Ascending aorta (tissue), 2 donors: ENCODE measurements at regions of chr19 and their contacts with region 1.

Region 1: GRCh38 chr19:21505459-21506451 is at the start of gene ZNF429:
- DNase-seq: peak; percentile 84 to 97
- H3K4me3 ChIP-seq: peak within 1 kb of the TSS; percentile 81 to 90
- H3K27ac ChIP-seq: peak within 1 kb of the TSS; percentile 96
- H3K4me1 ChIP-seq: peaks cover 0 to 15% of the 10 kb centered on the region in 2 donors
- H3K27me3 ChIP-seq: no peaks in the 10 kb centered on the region
- CTCF ChIP-seq: no peak
- total RNA-seq, gene ZNF429: 1.9 TPM

Region 2: DNA sequence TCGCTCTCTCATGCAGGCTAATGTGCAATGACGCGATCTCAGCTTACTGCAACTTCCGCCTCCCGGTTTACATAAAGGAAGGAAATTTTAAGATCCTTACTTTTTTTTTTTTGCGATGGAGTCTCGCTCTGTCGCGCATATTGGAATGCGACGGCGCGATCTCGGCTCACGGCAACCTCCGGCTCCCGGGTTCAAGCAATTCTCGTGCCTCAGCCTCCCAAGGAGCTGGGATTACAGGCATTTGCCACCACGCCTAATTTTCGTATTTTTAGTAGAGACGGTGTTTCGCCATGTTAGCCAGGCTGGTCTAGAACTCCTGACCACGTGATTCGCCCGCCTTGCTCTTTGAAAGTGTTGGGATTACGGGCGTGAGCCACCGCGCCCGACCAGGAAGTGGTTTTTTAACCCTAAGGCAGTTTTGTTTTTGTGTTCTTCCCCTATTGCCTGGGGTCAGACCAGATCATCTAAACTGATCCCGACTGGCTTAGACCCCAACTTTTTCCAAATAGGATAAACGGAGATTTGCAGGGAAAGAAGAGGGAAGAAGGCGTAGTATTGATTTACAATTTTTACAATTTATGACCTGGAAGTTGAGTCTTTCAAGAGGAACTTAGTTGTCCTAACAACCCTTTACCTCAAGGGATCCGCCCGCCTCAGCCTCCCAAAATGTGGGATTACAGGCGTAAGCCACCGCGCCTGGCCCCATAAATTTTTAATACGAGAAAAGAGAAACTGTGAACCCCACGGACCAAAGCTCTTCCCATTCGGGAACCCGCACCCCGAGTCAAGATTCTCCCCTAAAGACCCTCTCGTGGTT is 1082.2 kb before region 1 on chr19:
- intact Hi-C with region 1: loop called (anchors 10 kb)
- DNase-seq: peak; percentile 26 to 80
- H3K4me3 ChIP-seq: peak overlapping the region; percentile 63 to 71
- H3K27ac ChIP-seq: peak overlapping the region; percentile 77 to 87
- H3K4me1 ChIP-seq: peaks cover 0 to 3% of the 10 kb centered on the region in 2 donors
- H3K27me3 ChIP-seq: no peaks in the 10 kb centered on the region
- CTCF ChIP-seq: no peak

Region 3: DNA sequence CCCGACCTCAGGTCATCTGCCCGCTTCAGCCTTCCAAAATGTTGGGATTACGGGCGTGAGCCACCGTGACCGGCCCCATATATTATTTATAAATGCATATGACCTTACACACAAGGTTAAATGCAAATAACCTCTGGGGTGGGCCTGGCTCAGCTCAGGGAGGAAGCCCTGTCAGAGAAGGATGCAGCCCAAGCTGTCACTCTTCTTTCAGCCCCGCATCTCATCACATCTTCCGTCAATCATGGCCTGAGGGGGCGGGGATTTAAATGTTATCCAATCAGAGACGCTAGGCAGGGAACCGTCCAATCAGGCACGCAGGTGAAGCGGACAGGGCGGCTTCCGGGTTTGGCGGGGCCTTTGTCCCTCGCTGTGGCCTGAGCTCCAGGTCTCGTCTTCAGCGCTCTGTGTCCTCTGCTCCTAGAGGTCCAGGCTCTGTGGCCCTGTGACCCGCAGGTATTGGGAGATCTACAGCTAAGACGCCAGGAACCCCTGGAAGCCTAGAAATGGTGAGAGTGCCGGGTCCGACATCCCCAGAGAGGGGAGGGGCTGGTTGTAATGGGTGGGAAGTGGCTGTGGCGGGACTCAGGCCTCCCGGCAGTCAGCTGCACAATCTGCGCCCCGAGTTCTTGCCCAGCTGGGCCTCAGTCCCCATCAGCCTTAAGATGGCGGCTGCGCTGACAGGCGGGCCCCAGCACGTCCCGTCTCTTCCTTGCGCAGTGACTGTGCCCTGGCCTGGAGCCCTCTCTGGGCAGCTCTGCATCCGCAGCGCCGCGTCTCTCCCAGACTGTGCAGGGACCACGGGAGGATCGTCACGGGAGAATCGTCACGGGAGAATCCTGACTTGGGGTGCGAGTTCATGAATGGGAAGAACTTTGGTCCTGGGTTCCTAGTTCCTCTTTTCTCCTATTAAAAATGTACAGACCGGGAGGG is 485.2 kb before region 1 on chr19 and contains the start of gene ZNF430:
- intact Hi-C with region 1: loop called (anchors 10 kb)
- DNase-seq: peak; percentile 84 to 98
- H3K4me3 ChIP-seq: peak within 1 kb of the TSS; percentile 93
- H3K27ac ChIP-seq: peak within 1 kb of the TSS; percentile 75 to 88
- H3K4me1 ChIP-seq: peaks cover 0 to 4% of the 10 kb centered on the region in 2 donors
- H3K27me3 ChIP-seq: no peaks in the 10 kb centered on the region
- CTCF ChIP-seq: no peak
- total RNA-seq, gene ZNF430: 5.3 TPM

Region 4: DNA sequence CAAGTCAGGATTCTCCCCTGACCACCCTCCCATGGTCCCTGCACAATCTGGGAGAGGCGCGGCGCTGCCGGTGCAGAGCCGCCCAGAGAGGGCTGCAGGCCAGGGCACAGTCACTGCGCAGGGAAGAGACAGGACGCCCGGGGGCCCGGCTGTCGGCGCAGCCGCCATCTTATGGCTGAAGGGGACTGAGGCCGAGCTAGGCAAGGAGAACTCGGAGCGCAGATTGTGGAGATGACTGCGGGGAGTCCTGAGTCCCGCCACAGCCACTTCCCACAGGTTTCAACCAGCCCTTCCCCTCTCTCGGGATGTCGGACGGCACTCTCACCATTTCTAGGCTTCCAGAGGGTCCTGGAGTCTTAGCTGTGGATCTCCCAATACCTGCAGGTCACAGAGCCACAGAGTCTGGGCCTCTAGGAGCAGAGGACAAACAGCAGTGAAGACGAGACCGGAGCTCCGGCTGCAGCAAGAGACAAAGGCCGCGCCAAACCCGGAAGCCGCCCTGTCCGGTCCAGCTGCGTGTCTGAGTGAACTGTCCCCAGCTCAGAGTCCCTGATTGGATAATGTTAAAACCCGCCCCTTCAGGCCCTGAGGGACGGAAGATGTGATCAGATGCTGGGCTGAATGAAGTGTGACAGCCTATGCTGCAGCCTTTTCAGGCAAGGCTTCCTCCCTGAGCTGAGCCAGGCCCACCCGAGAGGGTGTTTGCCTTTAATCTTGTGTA is 176.7 kb before region 1 on chr19 and contains the start of gene ZNF708:
- intact Hi-C with region 1: loop called (anchors 2 kb)
- DNase-seq: peak; percentile 78 to 95
- H3K4me3 ChIP-seq: peak within 1 kb of the TSS; percentile 78 to 88
- H3K27ac ChIP-seq: peak within 1 kb of the TSS; percentile 93 to 98
- H3K4me1 ChIP-seq: peaks cover 0 to 3% of the 10 kb centered on the region in 2 donors
- H3K27me3 ChIP-seq: no peaks in the 10 kb centered on the region
- CTCF ChIP-seq: no peak
- total RNA-seq, gene ZNF708: 11.0 TPM

Region 5: DNA sequence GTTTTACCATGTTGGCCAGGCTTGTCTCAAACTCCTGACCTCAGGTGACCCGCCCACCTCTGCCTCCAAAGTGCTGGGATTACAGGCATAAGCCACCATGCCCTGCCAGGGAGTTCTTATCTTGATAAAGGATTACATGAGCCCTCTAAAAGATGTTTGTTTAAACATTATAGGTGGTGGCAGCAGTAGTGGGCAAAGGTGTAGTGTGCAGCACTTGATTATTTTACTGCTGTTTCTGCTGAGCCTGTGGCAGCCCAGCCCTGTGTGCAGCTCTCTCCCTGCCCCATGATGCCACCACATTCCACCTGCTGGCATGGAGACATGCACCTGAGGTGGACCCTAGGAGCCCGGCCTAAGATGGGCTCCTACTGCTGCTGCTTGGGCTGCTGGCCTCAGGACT is 53.7 kb after region 1 on chr19:
- intact Hi-C with region 1: no loop called
- DNase-seq: no peak
- H3K4me3 ChIP-seq: no peak overlapping the region
- H3K27ac ChIP-seq: no peak overlapping the region
- H3K4me1 ChIP-seq: no peaks in the 10 kb centered on the region
- H3K27me3 ChIP-seq: no peaks in the 10 kb centered on the region
- CTCF ChIP-seq: no peak

Region 6: GRCh38 chr19:21767065-21767800 is 261.5 kb after region 1 on chr19 and contains the start of gene ZNF100:
- intact Hi-C with region 1: loop called (anchors 10 kb)
- DNase-seq: peak; percentile 76 to 96
- H3K4me3 ChIP-seq: peak within 1 kb of the TSS; percentile 59 to 86
- H3K27ac ChIP-seq: peak within 1 kb of the TSS; percentile 88 to 89
- H3K4me1 ChIP-seq: peaks cover 0 to 3% of the 10 kb centered on the region in 2 donors
- H3K27me3 ChIP-seq: no peaks in the 10 kb centered on the region
- CTCF ChIP-seq: no peak
- total RNA-seq, gene ZNF100: 4.2 TPM

Region 7: GRCh38 chr19:22622901-22623840 is 1117.4 kb after region 1 on chr19:
- intact Hi-C with region 1: loop called (anchors 10 kb)
- DNase-seq: peak in 1 of 2 donors; percentile 74
- H3K4me3 ChIP-seq: peak overlapping the region; percentile 43 to 85
- H3K27ac ChIP-seq: peak overlapping the region; percentile 51 to 64
- H3K4me1 ChIP-seq: peaks cover 0 to 4% of the 10 kb centered on the region in 2 donors
- H3K27me3 ChIP-seq: no peaks in the 10 kb centered on the region
- CTCF ChIP-seq: peak in 2 of 3 experiments; percentile 54 to 58